CD4-positive, alpha-beta T cell (primary cell): ENCODE measurements at regions of chr2 and their contacts with region 1.

Region 1: DNA sequence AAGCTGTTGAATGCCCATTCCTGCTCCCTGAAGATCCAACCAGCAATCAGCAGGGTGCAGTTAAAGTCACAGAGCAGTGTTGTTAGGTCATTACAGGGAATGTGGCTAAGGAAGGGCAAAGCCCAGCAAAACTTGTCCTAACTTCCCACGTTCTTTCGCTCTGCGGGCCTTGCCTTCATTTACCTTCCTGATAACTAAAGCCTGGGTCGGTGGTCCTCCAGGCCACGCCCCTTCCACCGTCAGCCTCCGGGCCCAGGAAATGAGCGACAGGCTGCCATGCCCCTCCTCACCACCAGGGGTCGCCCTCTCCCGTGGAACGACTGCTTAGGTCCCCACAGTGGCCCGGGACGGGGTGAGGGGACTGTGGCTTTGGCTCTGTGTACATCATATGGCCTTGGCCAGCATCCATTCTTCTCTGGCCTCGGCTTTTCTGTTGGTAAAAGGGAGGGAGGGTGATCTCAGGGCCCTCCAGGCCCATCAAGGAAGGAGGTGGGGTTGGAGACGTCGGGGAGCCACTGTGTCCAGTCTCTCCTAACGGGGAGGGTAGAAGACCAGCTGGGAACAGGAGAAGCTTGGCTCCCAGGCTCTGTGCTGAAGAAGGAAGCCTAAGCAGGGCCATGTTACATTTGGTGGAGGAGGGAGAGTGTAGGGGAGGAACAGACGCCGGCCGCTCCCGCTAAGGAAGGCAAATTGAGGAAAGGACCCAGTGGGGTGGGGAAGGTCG is 2.2 kb downstream of the SH2D6 start:
- DNase-seq: peak; percentile 78 to 96 (median 88)
- ATAC-seq: peak; percentile 68
- H3K4me3 ChIP-seq: peak overlapping the region; percentile 4
- H3K4me3 Mint-ChIP-seq: peak overlapping the region; percentile 80
- H3K27ac ChIP-seq: no peak overlapping the region
- H3K27ac Mint-ChIP-seq: peak overlapping the region; percentile 14
- H3K4me1 ChIP-seq: peaks cover 33% of the 10 kb centered on the region
- H3K4me1 Mint-ChIP-seq: peaks cover 24% of the 10 kb centered on the region
- H3K27me3 ChIP-seq: no peaks in the 10 kb centered on the region
- H3K27me3 Mint-ChIP-seq: no peaks in the 10 kb centered on the region
- CTCF ChIP-seq: peak; percentile 99

Region 2: GRCh38 chr2:85354286-85355072 is 66.2 kb before region 1 on chr2 and contains the starts of genes ELMOD3 and RETSAT:
- CTCF ChIA-PET with region 1: no interaction called
- POLR2A ChIA-PET with region 1: interaction called, 10 read pairs
- intact Hi-C with region 1: loop called (anchors 2 to 10 kb)
- DNase-seq: peak; percentile 89 to 99 (median 94)
- ATAC-seq: peak; percentile 98
- H3K4me3 ChIP-seq: peak within 1 kb of the TSS; percentile 68
- H3K4me3 Mint-ChIP-seq: peak within 1 kb of the TSS; percentile 99
- H3K27ac ChIP-seq: peak within 1 kb of the TSS; percentile 75
- H3K27ac Mint-ChIP-seq: peak within 1 kb of the TSS; percentile 94
- H3K4me1 ChIP-seq: peaks cover 44% of the 10 kb centered on the region
- H3K4me1 Mint-ChIP-seq: peaks cover 63% of the 10 kb centered on the region
- H3K27me3 ChIP-seq: no peaks in the 10 kb centered on the region
- H3K27me3 Mint-ChIP-seq: no peaks in the 10 kb centered on the region
- CTCF ChIP-seq: no peak
- total RNA-seq, gene ELMOD3: 13.5 to 15.3 TPM
- total RNA-seq, gene RETSAT: 19.2 to 22.2 TPM

Region 3: DNA sequence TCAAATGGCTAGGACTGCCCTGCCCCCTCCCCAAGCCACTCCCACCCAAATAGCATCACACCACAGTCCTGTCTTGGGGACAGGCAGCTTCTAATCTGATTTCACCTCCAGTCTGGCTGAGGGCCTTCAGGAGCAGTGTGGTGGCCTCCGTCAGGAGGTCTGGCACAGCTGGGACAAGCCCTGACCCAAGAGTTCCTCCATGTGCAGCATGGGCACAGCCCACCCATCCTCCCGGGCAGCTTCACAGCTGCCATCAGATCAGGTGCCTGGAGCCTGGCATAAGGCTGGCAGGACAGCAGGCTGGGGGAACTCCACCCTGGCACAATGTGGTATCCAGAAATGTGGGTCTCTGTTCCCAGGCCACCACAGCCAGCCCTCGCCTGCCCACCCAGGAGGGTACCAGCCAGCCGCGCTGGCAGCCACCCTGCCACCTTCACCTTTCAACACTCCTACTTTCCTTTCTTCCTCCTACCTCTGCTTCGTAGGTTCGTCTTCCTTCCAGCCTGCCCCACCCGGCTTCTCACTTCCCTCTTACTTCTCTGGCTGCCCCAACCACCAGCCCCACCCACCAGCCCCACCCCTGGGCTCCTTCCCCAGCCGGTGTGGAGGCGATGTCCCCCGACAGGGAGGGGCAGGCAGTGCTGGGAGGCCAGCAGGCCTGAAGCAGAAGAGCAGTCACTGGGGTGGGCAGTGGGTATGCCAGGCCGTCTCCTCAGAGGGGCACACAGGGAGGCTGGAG is 10.7 kb before region 1 on chr2 and contains the start of gene CAPG:
- CTCF ChIA-PET with region 1: interaction called, 3 read pairs
- POLR2A ChIA-PET with region 1: interaction called, 12 read pairs
- intact Hi-C with region 1: loop called in 1 of 2 experiments (anchors 2 kb)
- DNase-seq: peak in 11 of 14 experiments; percentile 17 to 68 (median 44)
- ATAC-seq: peak; percentile 13
- H3K4me3 ChIP-seq: peak within 1 kb of the TSS; percentile 56
- H3K4me3 Mint-ChIP-seq: peak within 1 kb of the TSS; percentile 81
- H3K27ac ChIP-seq: peak within 1 kb of the TSS; percentile 31 to 34
- H3K27ac Mint-ChIP-seq: peak within 1 kb of the TSS; percentile 77
- H3K4me1 ChIP-seq: peaks cover 69% of the 10 kb centered on the region
- H3K4me1 Mint-ChIP-seq: peaks cover 67% of the 10 kb centered on the region
- H3K27me3 ChIP-seq: peaks cover 0 to 5% of the 10 kb centered on the region in 2 experiments
- H3K27me3 Mint-ChIP-seq: peaks cover 2% of the 10 kb centered on the region
- CTCF ChIP-seq: no peak
- total RNA-seq, gene CAPG: 21.7 to 23.3 TPM

Region 4: GRCh38 chr2:85551698-85552678 is 131.3 kb after region 1 on chr2:
- CTCF ChIA-PET with region 1: interaction called, 44 read pairs
- POLR2A ChIA-PET with region 1: interaction called, 43 read pairs
- intact Hi-C with region 1: loop called (anchors 1 kb)
- DNase-seq: peak; percentile 83 to 94 (median 89)
- ATAC-seq: peak; percentile 99
- H3K4me3 ChIP-seq: no peak overlapping the region
- H3K4me3 Mint-ChIP-seq: no peak overlapping the region
- H3K27ac ChIP-seq: no peak overlapping the region
- H3K27ac Mint-ChIP-seq: peak overlapping the region; percentile 22
- H3K4me1 ChIP-seq: peaks cover 4% of the 10 kb centered on the region
- H3K4me1 Mint-ChIP-seq: peaks cover 7% of the 10 kb centered on the region
- H3K27me3 ChIP-seq: no peaks in the 10 kb centered on the region
- H3K27me3 Mint-ChIP-seq: no peaks in the 10 kb centered on the region
- CTCF ChIP-seq: peak; percentile 87

Region 5: GRCh38 chr2:85611705-85612587 is 191.2 kb after region 1 on chr2 and contains the start of gene C2orf68:
- CTCF ChIA-PET with region 1: no interaction called
- POLR2A ChIA-PET with region 1: interaction called, 4 read pairs
- intact Hi-C with region 1: loop called in 1 of 2 experiments (anchors 2 kb)
- DNase-seq: peak; percentile 59 to 88 (median 79)
- ATAC-seq: peak; percentile 52
- H3K4me3 ChIP-seq: peak within 1 kb of the TSS; percentile 58
- H3K4me3 Mint-ChIP-seq: peak within 1 kb of the TSS; percentile 95
- H3K27ac ChIP-seq: peak within 1 kb of the TSS; percentile 74 to 82
- H3K27ac Mint-ChIP-seq: peak within 1 kb of the TSS; percentile 86
- H3K4me1 ChIP-seq: peaks cover 40% of the 10 kb centered on the region
- H3K4me1 Mint-ChIP-seq: peaks cover 39% of the 10 kb centered on the region
- H3K27me3 ChIP-seq: no peaks in the 10 kb centered on the region
- H3K27me3 Mint-ChIP-seq: no peaks in the 10 kb centered on the region
- CTCF ChIP-seq: no peak
- total RNA-seq, gene C2orf68: 31.0 to 31.2 TPM

Region 6: GRCh38 chr2:85628658-85629057 is 208.0 kb after region 1 on chr2:
- CTCF ChIA-PET with region 1: no interaction called
- POLR2A ChIA-PET with region 1: no interaction called
- intact Hi-C with region 1: no loop called
- DNase-seq: peak in 1 of 14 experiments; percentile 23
- ATAC-seq: no peak
- H3K4me3 ChIP-seq: no peak overlapping the region
- H3K4me3 Mint-ChIP-seq: no peak overlapping the region
- H3K27ac ChIP-seq: no peak overlapping the region
- H3K27ac Mint-ChIP-seq: no peak overlapping the region
- H3K4me1 ChIP-seq: peaks cover 4% of the 10 kb centered on the region
- H3K4me1 Mint-ChIP-seq: no peaks in the 10 kb centered on the region
- H3K27me3 ChIP-seq: no peaks in the 10 kb centered on the region
- H3K27me3 Mint-ChIP-seq: no peaks in the 10 kb centered on the region
- CTCF ChIP-seq: no peak

Region 7: DNA sequence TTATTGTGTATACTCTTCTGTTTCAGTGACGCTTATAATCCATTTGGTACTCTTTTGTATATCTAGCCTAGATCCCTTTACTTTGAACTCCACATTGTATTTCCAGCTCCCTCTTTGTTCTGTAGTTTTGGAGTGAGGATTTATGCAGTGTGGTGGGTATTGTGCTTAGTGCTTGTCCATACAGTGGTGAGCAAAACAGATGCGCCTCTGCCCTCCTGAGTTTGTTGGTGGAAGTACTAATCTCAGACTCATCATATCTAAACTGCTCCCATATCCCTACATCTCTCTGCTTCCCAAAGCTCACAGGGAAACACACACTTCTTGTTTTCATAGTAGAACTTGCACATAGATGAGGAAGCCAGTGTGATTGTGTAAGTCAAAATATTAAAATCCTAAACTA is 697.4 kb after region 1 on chr2:
- CTCF ChIA-PET with region 1: no interaction called
- POLR2A ChIA-PET with region 1: no interaction called
- intact Hi-C with region 1: no loop called
- DNase-seq: no peak
- ATAC-seq: no peak
- H3K4me3 ChIP-seq: no peak overlapping the region
- H3K4me3 Mint-ChIP-seq: no peak overlapping the region
- H3K27ac ChIP-seq: no peak overlapping the region
- H3K27ac Mint-ChIP-seq: no peak overlapping the region
- H3K4me1 ChIP-seq: no peaks in the 10 kb centered on the region
- H3K4me1 Mint-ChIP-seq: peaks cover 8% of the 10 kb centered on the region
- H3K27me3 ChIP-seq: no peaks in the 10 kb centered on the region
- H3K27me3 Mint-ChIP-seq: no peaks in the 10 kb centered on the region
- CTCF ChIP-seq: no peak